ENCODE measurements at regions of chr15 and their contacts with region 1.

Region 1: GRCh38 chr15:48695088-48695826 is 49.7 kb upstream of the FBN1 start:
- DNase-seq: no peak
- ATAC-seq: no peak
- H3K4me3 ChIP-seq: no peak overlapping the region
- H3K27ac ChIP-seq: no peak overlapping the region
- H3K4me1 ChIP-seq: peaks cover 0 to 4% (median 0%) of the 10 kb centered on the region in 9 donors
- H3K27me3 ChIP-seq: no peaks in the 10 kb centered on the region
- CTCF ChIP-seq: no peak

Region 2: DNA sequence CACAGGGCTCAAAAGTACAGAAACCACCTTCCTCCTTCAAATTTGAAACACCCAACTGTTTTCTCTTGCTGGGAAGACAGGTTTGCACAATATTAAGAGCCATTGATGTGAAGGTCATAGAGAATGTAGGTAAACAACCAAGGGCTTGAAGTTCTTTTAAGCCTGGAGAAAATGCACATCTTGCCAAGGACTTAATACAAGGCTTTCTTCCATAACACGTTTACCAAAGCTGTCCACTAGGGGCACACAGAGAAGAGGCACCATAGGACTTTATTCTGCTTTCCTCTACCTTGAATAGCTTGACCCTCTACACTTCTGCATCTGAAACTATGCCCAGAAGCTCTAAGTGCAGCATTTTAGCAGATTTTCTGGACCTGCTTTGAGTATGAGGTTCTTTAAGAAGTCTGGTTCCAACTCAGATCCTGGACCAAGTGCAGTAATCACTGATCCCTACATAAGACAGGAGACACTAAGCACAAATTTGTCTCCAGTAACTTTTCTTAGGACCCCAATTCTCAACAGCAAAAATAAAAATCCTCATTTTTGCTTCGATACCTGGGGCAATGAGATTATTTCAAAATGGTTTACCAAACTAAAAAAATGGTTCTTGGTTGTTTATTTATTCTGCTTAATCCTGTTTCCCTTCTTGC is 187.7 kb before region 1 on chr15:
- intact Hi-C with region 1: loop called in 1 of 10 experiments (anchors 10 kb)
- DNase-seq: peak in 1 of 2 donors; percentile 25
- ATAC-seq: peak in 5 of 8 donors; percentile 25 to 79 (median 56)
- H3K4me3 ChIP-seq: no peak overlapping the region
- H3K27ac ChIP-seq: no peak overlapping the region
- H3K4me1 ChIP-seq: peaks cover 0 to 22% (median 0%) of the 10 kb centered on the region in 9 donors
- H3K27me3 ChIP-seq: no peaks in the 10 kb centered on the region
- CTCF ChIP-seq: peak; percentile 27 to 67 (median 54)